ENCODE measurements at regions of chr9 and their contacts with region 1.

Region 1: GRCh38 chr9:14768405-14769229 is 46.1 kb upstream of the CER1 start:
- DNase-seq: no peak

Region 2: GRCh38 chr9:14478175-14479162 is 290.1 kb before region 1 on chr9:
- intact Hi-C with region 1: loop called (anchors 10 kb)
- DNase-seq: no peak

Region 3: DNA sequence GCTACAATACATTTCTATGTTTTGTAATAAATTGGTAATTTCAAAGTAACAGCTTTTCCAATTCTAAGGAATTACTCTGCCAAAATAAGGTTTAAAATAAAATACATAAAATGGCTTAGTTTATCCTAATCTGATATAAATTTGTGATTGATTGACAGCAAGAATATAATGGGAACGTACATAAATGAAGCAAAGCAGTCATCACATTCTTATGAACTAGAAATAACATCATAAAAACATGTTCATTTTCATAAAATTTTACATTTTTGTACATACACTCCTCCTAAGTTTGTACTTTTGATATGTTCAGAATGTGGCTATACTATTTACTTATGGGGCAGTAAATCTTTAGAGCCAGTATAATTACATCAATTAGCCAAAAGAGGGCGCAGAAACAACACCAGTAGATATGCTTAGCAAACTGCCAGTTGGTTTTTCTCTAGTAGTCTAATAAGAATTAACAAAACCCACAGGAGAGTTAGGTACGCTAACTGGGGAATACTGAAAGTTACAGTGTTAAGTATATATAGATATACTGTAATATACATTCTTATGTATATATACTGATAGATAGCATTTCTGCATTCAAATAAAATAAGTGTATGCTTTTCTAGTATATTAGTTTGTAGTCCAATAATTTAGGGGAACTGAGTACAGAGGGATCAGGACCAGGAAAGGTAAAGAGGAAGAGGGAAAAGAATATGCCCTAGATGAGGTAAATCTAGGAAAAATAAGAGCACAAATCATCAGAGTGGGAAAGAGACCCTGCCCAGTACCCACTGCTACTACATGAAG is 152.2 kb before region 1 on chr9:
- intact Hi-C with region 1: loop called (anchors 5 kb)
- DNase-seq: no peak